K562 (cell line): ENCODE measurements at regions of chr1 and their contacts with region 1.

Region 1: GRCh38 chr1:62735491-62736171 is 47.4 kb upstream of the DOCK7 start:
- DNase-seq: no peak
- ATAC-seq: no peak
- H3K4me3 ChIP-seq: no peak overlapping the region
- H3K27ac ChIP-seq: no peak overlapping the region
- H3K4me1 ChIP-seq: no peaks in the 10 kb centered on the region
- H3K27me3 ChIP-seq: no peaks in the 10 kb centered on the region; a peak in 2 of 5 replicates
- CTCF ChIP-seq: no peak
- EP300 ChIP-seq: no peak
- POLR2A ChIP-seq: no peak
- RAD21 ChIP-seq: no peak

Region 2: DNA sequence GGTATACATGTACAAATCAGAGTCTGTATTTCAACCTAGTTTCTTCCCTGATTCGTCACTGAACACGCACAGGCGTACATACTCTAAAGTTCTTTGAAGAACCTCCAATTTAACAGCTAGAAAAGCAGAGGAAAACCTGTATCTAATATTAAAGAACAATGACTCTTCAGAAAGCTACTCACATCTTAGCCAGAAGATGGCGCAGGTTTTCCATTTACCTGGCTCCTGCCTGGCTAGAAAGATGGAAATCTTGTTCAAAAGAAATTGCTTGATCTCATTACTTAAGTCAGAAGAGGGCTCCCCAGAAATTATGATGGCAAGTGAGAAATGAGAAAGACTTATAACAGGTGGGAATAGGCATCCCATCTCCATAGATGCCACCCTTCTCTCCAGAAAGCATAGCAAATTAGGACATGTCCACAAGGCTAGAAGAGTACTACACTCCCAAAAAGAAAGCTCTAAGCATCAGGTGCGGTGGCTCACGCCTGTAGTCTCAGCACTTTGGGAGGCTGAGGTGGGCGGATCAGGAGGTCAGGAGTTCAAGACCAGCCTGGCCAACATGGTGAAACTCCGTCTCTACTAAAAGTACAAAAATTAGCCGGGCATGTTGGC is 560.0 kb before region 1 on chr1:
- CTCF ChIA-PET with region 1: no interaction called
- POLR2A ChIA-PET with region 1: no interaction called
- in situ Hi-C with region 1: loop called (anchors 10 kb)
- intact Hi-C with region 1: no loop called
- DNase-seq: peak; percentile 21 to 46 (median 30)
- ATAC-seq: peak; percentile 75
- H3K4me3 ChIP-seq: no peak overlapping the region
- H3K27ac ChIP-seq: no peak overlapping the region
- H3K4me1 ChIP-seq: no peaks in the 10 kb centered on the region
- H3K27me3 ChIP-seq: peaks cover 4 to 5% of the 10 kb centered on the region in 2 experiments; a peak in 3 of 5 replicates
- CTCF ChIP-seq: peak; percentile 55 to 82 (median 60); a peak in 5 of 6 replicates
- EP300 ChIP-seq: no peak
- POLR2A ChIP-seq: no peak
- RAD21 ChIP-seq: peak; percentile 66 to 87